Activated CD4-positive, alpha-beta T cell treated with anti-CD3 and anti-CD28 coated beads for 36 hours (primary cell): ENCODE measurements at regions of chrX and their contacts with region 1.

Region 1: GRCh38 chrX:13005661-13006473 is 31.0 kb downstream of the TMSB4X start:
- DNase-seq: peak; percentile 44
- ATAC-seq: peak; percentile 62
- H3K4me3 Mint-ChIP-seq: peak overlapping the region; percentile 72
- H3K27ac Mint-ChIP-seq: peak overlapping the region; percentile 100
- H3K4me1 Mint-ChIP-seq: peaks cover 69% of the 10 kb centered on the region
- H3K27me3 Mint-ChIP-seq: no peaks in the 10 kb centered on the region

Region 2: DNA sequence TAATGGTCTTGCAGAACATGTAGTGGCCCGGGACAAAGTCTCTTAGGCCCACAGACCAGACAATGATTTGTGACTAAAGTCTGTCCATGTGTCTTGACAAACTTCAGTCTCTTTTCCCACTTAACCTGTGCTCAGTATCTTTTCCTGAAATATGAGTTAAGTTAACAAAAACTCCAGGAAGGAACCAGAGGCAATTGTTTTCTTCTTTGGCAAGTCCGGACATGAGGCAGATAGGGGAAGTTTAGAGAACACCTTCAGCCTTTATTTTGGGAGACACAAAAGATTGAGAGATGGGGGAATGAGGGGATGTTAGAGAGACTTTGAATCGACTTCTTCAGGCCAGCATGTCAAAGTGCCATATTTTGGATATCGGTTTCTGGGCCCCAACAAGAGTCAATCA is 947.8 kb before region 1 on chrX:
- CTCF ChIA-PET with region 1: no interaction called
- POLR2A ChIA-PET with region 1: no interaction called
- intact Hi-C with region 1: no loop called
- DNase-seq: no peak
- ATAC-seq: no peak
- H3K4me3 Mint-ChIP-seq: no peak overlapping the region
- H3K27ac Mint-ChIP-seq: no peak overlapping the region
- H3K4me1 Mint-ChIP-seq: no peaks in the 10 kb centered on the region
- H3K27me3 Mint-ChIP-seq: no peaks in the 10 kb centered on the region

Region 3: DNA sequence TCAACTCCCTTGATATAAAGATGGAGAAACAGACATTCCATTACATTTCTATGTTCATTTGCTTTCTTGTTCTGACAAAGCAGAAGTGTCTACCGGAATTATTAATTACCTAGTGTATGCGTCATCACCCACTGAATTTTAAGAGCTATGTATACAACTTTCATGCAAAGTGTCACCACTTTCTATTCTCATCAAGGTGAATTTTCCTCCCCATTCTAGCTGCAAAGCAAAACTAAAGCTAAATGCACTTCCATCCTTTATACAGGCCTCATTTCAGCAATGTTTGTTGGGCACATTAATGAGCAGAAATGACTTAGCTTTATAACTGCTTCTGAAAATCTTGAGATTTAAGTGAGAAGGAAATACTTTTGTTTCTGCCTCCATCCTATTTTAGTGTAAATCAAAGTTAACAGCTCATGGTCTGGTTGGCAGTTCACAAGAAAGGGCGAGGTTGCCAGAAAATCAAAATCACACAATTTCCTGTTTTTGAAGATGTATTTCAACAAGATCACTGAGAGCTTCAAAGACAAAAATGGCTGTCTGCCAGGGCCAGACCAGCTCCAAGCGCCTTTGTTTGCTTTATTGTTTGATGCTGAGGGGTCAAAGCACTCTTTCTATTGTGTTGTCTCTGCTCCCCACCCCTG is 45.8 kb after region 1 on chrX:
- CTCF ChIA-PET with region 1: interaction called, 7 read pairs
- POLR2A ChIA-PET with region 1: interaction called, 7 read pairs
- intact Hi-C with region 1: loop called in 1 of 2 experiments (anchors 2 kb)
- DNase-seq: no peak
- ATAC-seq: peak; percentile 81
- H3K4me3 Mint-ChIP-seq: no peak overlapping the region
- H3K27ac Mint-ChIP-seq: peak overlapping the region; percentile 90
- H3K4me1 Mint-ChIP-seq: peaks cover 83% of the 10 kb centered on the region
- H3K27me3 Mint-ChIP-seq: no peaks in the 10 kb centered on the region